PC-9 (cell line): ENCODE measurements at regions of chr20 and their contacts with region 1.

Region 1: DNA sequence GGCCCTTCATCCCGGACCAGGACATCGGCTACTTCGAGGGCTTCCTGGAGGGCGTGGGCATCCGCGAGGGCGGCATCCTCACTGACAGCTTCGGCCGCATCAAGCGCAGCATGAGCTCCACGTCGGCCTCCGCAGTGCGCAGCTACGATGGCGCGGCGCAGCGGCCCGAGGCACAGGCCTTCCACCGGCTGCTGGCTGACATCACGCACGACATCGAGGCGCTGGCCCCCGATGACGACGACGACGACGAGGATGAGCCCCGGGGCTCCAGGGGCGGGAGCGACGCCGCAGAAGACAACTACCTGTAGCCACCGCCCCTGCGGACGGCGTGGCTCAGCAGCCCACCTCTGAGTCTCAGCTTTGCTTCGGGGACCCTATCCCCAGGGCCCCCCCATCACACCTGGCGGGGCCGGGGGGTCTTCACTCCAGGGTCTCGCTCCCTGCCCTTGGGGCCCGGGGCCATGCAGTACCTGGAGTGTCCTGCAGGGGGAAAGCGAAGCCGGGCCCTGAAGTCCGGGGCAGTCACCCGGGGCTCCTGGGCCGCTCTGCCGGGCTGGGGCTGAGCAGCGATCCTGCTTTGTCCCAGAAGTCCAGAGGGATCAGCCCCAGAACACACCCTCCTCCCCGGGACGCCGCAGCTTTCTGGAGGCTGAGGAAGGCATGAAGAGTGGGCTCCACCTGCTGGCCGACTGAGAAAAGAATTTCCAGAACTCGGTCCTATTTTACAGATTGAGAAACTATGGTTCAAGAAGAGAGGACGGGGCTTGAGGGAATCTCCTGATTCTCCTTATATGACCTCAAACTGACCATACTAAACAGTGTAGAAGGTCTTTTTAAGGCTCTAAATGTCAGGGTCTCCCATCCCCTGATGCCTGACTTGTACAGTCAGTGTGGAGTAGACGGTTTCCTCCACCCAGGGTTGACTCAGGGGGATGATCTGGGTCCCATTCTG is 20.8 kb upstream of the HCK start:
- DNase-seq: peak; percentile 50 to 75
- H3K4me3 ChIP-seq: no peak overlapping the region
- H3K27ac ChIP-seq: no peak overlapping the region
- H3K4me1 ChIP-seq: no peaks in the 10 kb centered on the region
- H3K27me3 ChIP-seq: peaks cover 49% of the 10 kb centered on the region
- CTCF ChIP-seq: peak; percentile 98

Region 2: GRCh38 chr20:31849455-31849925 is 181.8 kb before region 1 on chr20:
- CTCF ChIA-PET with region 1: no interaction called
- POLR2A ChIA-PET with region 1: no interaction called
- intact Hi-C with region 1: loop called (anchors 1 kb)
- DNase-seq: peak in 1 of 2 experiments; percentile 54
- H3K4me3 ChIP-seq: no peak overlapping the region
- H3K27ac ChIP-seq: no peak overlapping the region
- H3K4me1 ChIP-seq: no peaks in the 10 kb centered on the region
- H3K27me3 ChIP-seq: peaks cover 33% of the 10 kb centered on the region
- CTCF ChIP-seq: no peak

Region 3: GRCh38 chr20:31956556-31957526 is 74.4 kb before region 1 on chr20:
- CTCF ChIA-PET with region 1: interaction called, 10 read pairs
- POLR2A ChIA-PET with region 1: no interaction called
- intact Hi-C with region 1: loop called (anchors 5 kb)
- DNase-seq: no peak
- H3K4me3 ChIP-seq: no peak overlapping the region
- H3K27ac ChIP-seq: no peak overlapping the region
- H3K4me1 ChIP-seq: no peaks in the 10 kb centered on the region
- H3K27me3 ChIP-seq: peaks cover 44% of the 10 kb centered on the region
- CTCF ChIP-seq: no peak

Region 4: DNA sequence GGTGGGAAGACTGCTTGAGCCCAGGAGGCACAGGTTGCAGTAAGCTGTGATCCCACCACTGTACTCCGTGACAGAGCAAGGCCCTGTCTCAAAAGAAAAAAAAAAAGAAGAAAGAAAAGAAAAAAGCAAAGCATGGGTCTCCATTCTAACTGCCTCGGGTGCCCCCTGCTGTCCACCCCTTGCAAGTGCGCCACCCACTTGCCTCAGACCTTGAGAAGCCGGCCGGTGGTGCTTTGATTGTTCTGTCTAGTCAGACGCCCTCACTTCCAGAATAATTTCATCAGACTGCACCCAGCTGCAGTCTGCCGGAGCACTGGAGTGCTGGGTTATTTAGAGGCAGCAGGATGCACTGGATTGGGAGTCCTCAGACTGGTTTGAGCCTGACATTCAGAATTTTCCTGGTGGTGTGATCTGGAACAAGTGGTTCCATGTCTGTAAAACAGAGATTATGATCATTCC is 60.6 kb after region 1 on chr20:
- CTCF ChIA-PET with region 1: no interaction called
- POLR2A ChIA-PET with region 1: no interaction called
- intact Hi-C with region 1: loop called (anchors 5 kb)
- DNase-seq: peak; percentile 59 to 83
- H3K4me3 ChIP-seq: no peak overlapping the region
- H3K27ac ChIP-seq: no peak overlapping the region
- H3K4me1 ChIP-seq: no peaks in the 10 kb centered on the region
- H3K27me3 ChIP-seq: peaks cover 40% of the 10 kb centered on the region
- CTCF ChIP-seq: peak; percentile 91

Region 5: DNA sequence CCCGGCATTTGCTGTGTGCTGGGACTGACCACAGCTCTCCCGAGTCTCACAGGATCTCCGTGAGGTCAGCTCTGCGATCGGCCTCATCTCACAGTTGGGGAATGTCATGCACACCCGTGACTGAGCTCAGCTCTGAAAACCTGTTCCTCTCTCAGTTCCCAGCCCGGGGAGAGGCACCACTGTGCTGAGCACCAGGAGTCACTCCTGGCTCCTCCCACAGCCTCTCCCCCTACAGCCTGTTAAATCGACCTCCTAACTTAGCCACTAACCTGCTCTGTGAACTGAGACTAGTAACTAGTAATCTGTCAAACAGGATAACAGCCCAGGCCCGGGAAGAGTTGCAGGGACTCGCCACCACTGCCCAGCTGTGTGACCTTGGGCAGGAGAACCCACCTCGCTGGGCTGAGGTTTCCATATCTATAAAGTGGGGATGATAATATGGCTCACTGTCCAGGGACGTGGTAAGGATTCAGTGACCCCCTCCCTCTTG is 573.9 kb after region 1 on chr20:
- CTCF ChIA-PET with region 1: no interaction called
- POLR2A ChIA-PET with region 1: no interaction called
- intact Hi-C with region 1: no loop called
- DNase-seq: no peak
- H3K4me3 ChIP-seq: no peak overlapping the region
- H3K27ac ChIP-seq: no peak overlapping the region
- H3K4me1 ChIP-seq: 0 out of 2 replicates have a peak, but pooled peaks cover under 1% of the 10 kb centered on the region
- H3K27me3 ChIP-seq: no peaks in the 10 kb centered on the region
- CTCF ChIP-seq: no peak